AG04449 (cell line): ENCODE measurements at regions of chr1 and their contacts with region 1.

Region 1: GRCh38 chr1:150186789-150187559 is 37.3 kb downstream of the PLEKHO1 start:
- DNase-seq: no peak
- H3K4me3 ChIP-seq: no peak overlapping the region
- CTCF ChIP-seq: no peak

Region 2: DNA sequence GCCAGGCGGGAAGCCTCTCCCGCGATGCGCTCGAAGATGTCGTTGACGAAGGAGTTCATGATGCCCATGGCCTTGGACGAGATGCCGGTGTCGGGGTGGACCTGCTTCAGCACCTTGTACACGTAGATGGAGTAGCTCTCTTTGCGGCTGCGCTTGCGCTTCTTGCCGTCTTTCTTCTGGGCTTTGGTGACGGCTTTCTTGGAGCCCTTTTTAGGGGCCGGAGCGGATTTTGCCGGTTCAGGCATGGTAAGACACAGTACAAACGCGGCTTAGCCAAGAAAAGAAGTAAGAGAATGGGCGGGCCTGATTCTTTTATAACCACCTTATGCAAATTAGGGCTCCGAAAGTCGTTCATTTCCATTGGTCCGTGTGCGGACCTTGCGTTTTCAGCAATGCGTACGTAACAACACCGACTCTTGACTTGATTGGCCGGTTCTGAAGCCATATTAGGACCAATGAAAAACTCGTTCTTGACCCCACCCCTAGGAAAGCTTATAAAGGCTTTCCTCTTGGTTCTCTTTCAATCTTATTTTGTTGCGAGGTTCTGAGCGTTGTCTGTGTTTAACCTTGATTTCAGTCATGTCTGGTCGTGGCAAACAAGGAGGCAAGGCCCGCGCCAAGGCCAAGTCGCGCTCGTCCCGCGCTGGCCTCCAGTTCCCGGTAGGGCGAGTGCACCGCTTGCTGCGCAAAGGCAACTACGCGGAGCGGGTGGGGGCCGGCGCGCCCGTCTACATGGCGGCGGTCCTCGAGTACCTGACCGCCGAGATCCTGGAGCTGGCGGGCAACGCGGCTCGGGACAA is 300.4 kb before region 1 on chr1:
- CTCF ChIA-PET with region 1: interaction called, 18 read pairs
- POLR2A ChIA-PET with region 1: interaction called, 8 read pairs
- DNase-seq: peak; percentile 98
- H3K4me3 ChIP-seq: peak overlapping the region; percentile 69
- CTCF ChIP-seq: no peak

Region 3: GRCh38 chr1:150053926-150054325 is 133.0 kb before region 1 on chr1:
- CTCF ChIA-PET with region 1: interaction called, 11 read pairs
- POLR2A ChIA-PET with region 1: no interaction called
- DNase-seq: no peak
- H3K4me3 ChIP-seq: no peak overlapping the region
- CTCF ChIP-seq: no peak

Region 4: GRCh38 chr1:150067184-150068036 is 119.6 kb before region 1 on chr1 and contains the start of gene VPS45:
- CTCF ChIA-PET with region 1: interaction called, 135 read pairs
- POLR2A ChIA-PET with region 1: no interaction called
- DNase-seq: peak; percentile 42
- H3K4me3 ChIP-seq: peak within 1 kb of the TSS; percentile 79
- CTCF ChIP-seq: peak; percentile 12

Region 5: GRCh38 chr1:150162862-150163706 is 23.9 kb before region 1 on chr1:
- CTCF ChIA-PET with region 1: interaction called, 42 read pairs
- POLR2A ChIA-PET with region 1: interaction called, 7 read pairs
- DNase-seq: peak; percentile 99
- H3K4me3 ChIP-seq: peak overlapping the region; percentile 29; the same call in 1 of the 2 replicates
- CTCF ChIP-seq: no peak

Region 6: DNA sequence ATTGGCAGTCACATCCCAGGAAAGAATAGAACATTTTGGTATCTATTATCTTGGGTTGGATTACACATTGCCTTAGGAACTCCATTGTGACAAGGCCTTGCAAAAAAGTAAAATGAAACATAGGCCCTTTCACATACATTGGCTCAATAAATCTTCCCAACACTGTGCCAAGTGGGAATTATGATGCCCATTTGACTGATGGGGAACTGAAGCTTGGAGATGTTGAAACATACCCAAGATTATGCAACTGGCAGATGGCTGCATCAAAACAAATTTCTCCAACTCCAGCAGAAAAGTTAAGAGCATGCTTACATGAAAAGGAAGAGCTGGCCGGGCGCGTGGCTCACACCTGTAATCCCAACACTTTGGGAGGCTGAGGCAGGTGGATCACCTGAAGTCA is 10.4 kb before region 1 on chr1:
- CTCF ChIA-PET with region 1: interaction called, 52 read pairs
- POLR2A ChIA-PET with region 1: no interaction called
- DNase-seq: no peak
- H3K4me3 ChIP-seq: no peak overlapping the region
- CTCF ChIP-seq: no peak

Region 7: DNA sequence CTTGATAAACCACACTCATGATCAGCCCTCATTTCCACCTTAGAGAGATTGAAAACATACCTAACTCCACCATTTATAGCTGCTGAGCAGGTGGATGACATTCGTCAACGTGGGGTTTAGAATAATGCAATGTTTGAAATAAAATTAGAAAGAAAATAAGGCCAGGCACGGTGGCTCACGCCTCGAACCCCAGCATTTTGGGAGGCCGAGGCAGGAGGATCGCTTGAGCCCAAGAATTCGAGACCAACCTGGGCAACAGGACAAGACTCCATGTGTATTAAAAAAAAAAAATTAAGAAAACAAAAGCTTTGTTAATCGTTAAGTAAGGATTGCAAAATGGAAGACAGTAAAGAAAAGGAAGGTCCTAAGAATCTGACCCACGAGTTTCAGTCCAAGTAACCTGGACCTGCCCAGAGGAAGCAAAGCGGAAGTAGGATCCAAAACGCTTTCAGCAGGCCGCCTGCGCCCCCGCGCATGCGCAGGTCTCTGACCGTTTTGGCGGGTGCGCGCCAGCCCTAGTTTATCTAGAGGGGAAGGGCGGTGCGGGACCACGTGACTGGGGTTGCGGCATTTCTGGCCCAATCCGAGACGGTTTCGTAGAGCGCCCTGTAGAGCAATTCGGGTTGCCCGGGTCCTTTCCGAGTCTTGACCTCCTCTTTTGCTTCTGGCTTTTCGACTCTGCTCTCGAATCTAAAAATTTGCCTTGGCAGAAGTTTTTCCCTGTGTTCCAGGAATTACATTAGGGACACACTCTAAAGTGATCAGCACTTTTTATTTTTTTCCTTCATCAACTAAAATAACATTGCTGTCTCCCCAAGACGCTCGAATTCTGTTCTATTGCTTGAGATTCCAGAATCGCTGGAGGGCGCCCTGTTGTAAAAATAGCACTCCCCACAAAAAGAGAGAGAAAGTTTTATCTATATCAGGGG is 26.5 kb after region 1 on chr1:
- CTCF ChIA-PET with region 1: interaction called, 10 read pairs
- POLR2A ChIA-PET with region 1: no interaction called
- DNase-seq: no peak
- H3K4me3 ChIP-seq: peak overlapping the region; percentile 52
- CTCF ChIP-seq: no peak

Region 8: DNA sequence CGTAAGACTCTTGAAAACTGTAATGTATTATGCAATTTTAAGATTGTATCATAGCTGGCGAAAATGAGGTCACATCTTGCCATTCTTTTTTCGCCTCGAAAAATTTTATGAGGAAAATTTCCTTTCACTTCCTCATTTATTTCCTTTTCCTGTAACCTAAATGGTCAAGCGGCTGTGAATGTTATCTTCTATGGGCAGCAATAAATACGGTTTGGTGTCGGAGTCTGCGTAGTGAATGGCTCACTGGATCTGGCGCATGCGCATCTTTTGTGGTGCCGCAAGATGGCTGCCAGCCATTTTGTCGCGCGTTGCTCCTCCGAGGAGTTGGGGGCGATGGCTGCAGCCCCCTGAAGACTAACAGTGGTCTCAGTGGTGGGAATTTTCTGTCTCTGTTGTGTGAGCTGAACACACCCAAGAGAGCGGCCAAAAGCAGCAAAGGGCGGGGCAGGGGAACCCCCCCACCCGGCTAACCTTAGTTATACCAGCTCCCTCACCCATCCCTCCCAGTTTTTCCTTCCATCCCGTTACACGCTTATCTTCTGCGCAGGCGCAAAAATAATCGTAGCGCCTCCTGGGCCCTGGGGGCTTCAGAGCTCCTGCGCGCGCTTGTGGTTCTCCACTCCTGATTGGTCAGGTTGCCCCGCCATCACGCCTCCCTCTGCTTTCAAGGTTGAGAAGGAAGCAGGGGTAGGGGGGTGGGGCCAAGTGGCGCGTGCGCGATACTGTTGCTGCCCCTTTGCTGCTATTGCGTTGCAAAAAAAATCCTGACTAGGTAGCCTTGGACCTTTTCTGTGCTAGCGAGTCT is 176.7 kb after region 1 on chr1 and contains the start of gene RPRD2:
- CTCF ChIA-PET with region 1: no interaction called
- POLR2A ChIA-PET with region 1: no interaction called
- DNase-seq: peak; percentile 94
- H3K4me3 ChIP-seq: peak within 1 kb of the TSS; percentile 74
- CTCF ChIP-seq: no peak

Region 9: GRCh38 chr1:150529017-150529416 is 342.0 kb after region 1 on chr1:
- CTCF ChIA-PET with region 1: no interaction called
- POLR2A ChIA-PET with region 1: no interaction called
- DNase-seq: no peak
- H3K4me3 ChIP-seq: no peak overlapping the region
- CTCF ChIP-seq: no peak